Adrenal gland (tissue), 19 donors: ENCODE measurements at regions of chr1 and their contacts with region 1.

Region 1: DNA sequence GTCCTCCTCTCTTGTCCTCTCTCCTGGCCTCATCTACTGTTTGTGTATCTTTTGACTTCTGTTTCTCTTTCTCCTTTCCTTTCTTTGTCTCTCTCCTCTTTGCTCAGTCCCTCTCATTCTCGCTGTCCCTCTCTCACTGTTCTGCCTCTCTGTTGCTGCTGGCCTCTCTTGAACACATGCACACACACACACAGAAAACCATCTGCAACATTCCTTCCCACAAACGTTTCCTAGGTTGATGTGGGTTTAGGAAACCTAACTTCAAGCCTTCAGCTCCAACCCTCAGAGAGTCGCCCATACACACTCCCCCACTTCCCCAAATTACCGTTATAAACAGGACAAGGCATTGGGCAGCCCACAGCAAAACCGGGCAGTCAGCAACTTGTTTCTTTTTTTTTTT is 10.9 kb upstream of the SSBP3 start:
- DNase-seq: peak in 1 of 7 donors; percentile 8
- H3K4me3 ChIP-seq: no peak overlapping the region
- H3K27ac ChIP-seq: no peak overlapping the region
- H3K4me1 ChIP-seq: no peaks in the 10 kb centered on the region
- H3K27me3 ChIP-seq: no peaks in the 10 kb centered on the region
- CTCF ChIP-seq: no peak
- POLR2A ChIP-seq: no peak

Region 2: GRCh38 chr1:54474639-54475251 is 57.6 kb after region 1 on chr1:
- intact Hi-C with region 1: loop called in 1 of 2 experiments (anchors 5 kb)
- DNase-seq: peak in 1 of 7 donors; percentile 16
- H3K4me3 ChIP-seq: peak overlapping the region in 1 of 4 donors; percentile 61
- H3K27ac ChIP-seq: peak overlapping the region in 1 of 5 donors; percentile 29
- H3K4me1 ChIP-seq: peaks cover 5 to 15% of the 10 kb centered on the region in 2 donors
- H3K27me3 ChIP-seq: no peaks in the 10 kb centered on the region
- CTCF ChIP-seq: no peak
- POLR2A ChIP-seq: no peak